ENCODE measurements at regions of chr6 and their contacts with region 1.

Region 1: DNA sequence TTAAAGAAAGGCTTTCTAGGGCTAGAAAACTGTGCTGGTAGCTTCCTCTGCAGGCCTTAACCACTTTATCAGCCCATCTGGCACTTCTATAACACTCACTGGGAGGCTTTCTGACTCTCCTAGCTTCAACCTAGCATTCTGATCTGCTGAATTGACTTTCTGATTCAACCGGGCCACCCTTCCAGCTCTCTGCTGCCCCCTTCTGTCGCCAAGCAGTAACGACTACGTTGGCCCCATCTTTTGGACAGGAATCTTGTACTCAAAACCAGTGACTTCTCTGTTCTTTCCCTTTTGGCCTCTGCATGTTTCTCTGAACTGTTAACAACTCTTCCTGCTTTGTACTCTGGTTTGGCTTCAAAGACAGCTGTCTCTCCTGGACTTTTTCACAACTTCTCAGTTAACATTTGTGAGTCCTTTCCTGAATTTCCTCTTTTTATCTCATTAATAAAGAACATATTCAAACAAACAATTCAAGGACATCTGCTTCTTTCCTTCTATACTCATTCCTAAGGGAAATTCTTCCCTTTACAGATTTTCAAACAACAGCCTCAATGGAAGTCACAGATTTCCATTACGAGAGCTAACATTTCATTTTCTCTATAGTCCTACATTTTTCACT is 43.9 kb upstream of the FAM135A start:
- DNase-seq: peak; percentile 26
- H3K4me3 ChIP-seq: no peak overlapping the region
- H3K27ac ChIP-seq: no peak overlapping the region
- H3K27me3 ChIP-seq: peaks cover 28% of the 10 kb centered on the region
- CTCF ChIP-seq: peak; percentile 93

Region 2: GRCh38 chr6:70196531-70196930 is 172.9 kb before region 1 on chr6:
- CTCF ChIA-PET with region 1: no interaction called
- POLR2A ChIA-PET with region 1: no interaction called
- DNase-seq: no peak
- H3K4me3 ChIP-seq: no peak overlapping the region
- H3K27ac ChIP-seq: no peak overlapping the region
- H3K27me3 ChIP-seq: no peaks in the 10 kb centered on the region
- CTCF ChIP-seq: no peak

Region 3: DNA sequence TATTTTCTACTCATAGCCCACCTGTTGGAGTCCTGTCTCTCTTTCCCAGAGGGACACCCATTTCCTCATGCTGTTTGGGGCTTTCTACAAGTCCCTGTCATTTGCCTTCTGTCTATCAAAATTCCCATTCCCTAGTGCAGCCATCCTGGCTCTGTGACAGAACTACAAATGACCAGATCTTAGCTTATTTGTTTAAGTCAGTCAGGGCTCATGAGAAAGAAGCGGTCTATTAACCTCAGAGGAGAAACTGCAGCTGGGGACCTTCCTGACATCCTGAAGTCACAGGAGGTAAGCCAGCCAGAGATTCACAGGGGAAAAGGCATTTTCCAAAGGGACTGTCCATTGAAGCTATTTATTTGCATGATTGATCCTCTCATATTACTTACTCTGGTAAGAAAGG is 64.8 kb before region 1 on chr6:
- CTCF ChIA-PET with region 1: interaction called, 136 read pairs
- POLR2A ChIA-PET with region 1: no interaction called
- DNase-seq: no peak
- H3K4me3 ChIP-seq: no peak overlapping the region
- H3K27ac ChIP-seq: no peak overlapping the region
- H3K27me3 ChIP-seq: peaks cover 10% of the 10 kb centered on the region
- CTCF ChIP-seq: no peak

Region 4: GRCh38 chr6:70380271-70380670 is 10.8 kb after region 1 on chr6:
- CTCF ChIA-PET with region 1: interaction called, 14 read pairs
- POLR2A ChIA-PET with region 1: no interaction called
- DNase-seq: no peak
- H3K4me3 ChIP-seq: no peak overlapping the region
- H3K27ac ChIP-seq: no peak overlapping the region
- H3K27me3 ChIP-seq: no peaks in the 10 kb centered on the region
- CTCF ChIP-seq: no peak

Region 5: DNA sequence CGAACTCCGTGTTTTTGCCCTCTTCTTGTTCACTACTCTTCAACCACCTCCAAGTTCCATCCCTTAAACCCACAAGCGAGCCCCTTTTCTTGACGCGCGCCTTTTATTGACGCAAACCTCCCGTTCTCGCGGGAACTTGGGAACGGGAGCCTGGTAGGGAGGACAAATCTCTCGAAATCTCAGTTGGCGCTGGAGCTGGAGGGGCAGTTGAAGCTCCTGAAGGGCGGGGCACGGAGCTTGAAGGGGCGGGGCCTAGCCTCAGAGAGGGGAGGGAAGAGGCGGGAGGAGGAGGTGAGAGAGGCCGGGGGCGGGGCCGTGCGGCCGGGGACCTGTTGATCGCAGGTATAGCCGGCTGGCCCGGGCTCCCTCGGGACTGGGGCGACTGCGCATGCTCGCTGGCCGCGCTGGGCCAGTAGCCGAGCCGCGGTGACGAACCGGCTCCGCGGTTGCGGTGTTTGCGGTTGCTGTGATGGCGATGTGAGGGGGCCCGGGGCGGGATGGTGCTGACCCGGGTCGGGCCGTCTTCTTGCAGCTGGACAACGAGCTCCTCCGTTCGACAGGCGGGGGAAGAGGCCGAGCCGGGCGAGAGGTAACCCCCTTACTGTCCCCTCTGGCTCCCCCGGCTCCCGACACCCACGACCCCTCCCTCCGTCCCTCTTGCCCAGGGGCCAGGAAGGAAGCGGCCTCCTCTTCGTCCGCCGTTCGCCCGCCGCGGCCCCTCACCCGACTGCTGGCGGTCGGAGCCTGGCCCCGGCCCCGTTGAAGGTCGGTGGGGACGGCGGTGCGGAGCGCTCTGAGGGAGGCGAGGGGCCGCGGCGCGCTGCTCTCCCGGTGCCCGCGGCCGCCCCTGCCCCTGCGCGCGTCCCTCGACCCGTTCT is 43.9 kb after region 1 on chr6 and contains the start of gene FAM135A:
- CTCF ChIA-PET with region 1: interaction called, 32 read pairs
- POLR2A ChIA-PET with region 1: interaction called, 3 read pairs
- DNase-seq: peak; percentile 94
- H3K4me3 ChIP-seq: peak within 1 kb of the TSS; percentile 86
- H3K27ac ChIP-seq: peak within 1 kb of the TSS; percentile 54
- H3K27me3 ChIP-seq: no peaks in the 10 kb centered on the region
- CTCF ChIP-seq: no peak
- polyA plus RNA-seq, gene FAM135A: 5.6 and 9.8 TPM in 2 replicates

Region 6: DNA sequence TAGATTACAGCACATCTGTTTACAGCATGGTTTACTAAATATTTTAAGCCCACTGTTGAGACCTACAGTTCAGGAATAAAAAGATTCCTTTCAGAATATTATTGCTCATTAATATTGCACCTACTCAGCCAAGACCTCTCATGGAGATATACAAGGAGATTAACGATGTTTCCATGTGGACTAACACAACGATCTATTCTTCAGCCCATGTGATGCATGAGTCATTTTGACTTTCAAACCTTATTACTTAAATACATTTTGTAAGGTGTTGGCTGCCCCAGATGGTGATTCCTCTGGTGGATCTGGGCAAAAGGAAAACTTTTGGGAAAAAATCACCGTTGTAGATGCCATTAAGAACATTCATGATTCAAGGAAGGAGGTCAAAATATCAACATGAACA is 149.3 kb after region 1 on chr6:
- CTCF ChIA-PET with region 1: no interaction called
- POLR2A ChIA-PET with region 1: no interaction called
- DNase-seq: no peak
- H3K4me3 ChIP-seq: no peak overlapping the region
- H3K27ac ChIP-seq: no peak overlapping the region
- H3K27me3 ChIP-seq: no peaks in the 10 kb centered on the region
- CTCF ChIP-seq: no peak

Region 7: DNA sequence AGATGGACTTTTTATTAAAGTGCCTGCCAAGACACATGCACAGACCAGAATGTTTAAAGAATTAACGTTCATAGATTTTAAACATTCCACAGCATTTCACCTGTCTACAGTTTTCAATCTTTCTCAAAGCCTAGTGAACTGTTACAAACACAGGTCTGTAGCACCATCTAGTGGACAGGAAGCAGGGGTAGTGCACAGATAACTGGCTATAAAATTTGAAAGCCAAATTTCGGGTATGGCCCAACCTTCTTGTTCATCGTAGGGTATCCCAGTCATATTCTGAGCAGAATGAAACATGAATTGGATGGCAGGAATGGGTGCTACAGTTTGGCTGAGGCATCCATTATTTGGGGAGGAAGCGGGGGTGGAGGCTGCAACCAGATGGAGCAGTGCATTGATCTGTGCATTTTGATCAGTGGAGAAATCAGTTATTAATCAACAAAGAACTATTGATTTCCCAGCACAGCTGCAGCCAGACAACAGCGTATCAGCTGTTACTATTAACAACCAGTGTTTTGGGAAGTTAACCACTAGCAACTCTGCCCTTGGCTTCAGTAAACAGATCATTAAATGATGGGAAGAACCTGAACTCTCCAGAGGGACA is 643.5 kb after region 1 on chr6:
- CTCF ChIA-PET with region 1: interaction called, 11 read pairs
- POLR2A ChIA-PET with region 1: no interaction called
- DNase-seq: no peak
- H3K4me3 ChIP-seq: no peak overlapping the region
- H3K27ac ChIP-seq: no peak overlapping the region
- H3K27me3 ChIP-seq: no peaks in the 10 kb centered on the region
- CTCF ChIP-seq: peak; percentile 84